ENCODE measurements at regions of chr22 and their contacts with region 1.

Region 1: DNA sequence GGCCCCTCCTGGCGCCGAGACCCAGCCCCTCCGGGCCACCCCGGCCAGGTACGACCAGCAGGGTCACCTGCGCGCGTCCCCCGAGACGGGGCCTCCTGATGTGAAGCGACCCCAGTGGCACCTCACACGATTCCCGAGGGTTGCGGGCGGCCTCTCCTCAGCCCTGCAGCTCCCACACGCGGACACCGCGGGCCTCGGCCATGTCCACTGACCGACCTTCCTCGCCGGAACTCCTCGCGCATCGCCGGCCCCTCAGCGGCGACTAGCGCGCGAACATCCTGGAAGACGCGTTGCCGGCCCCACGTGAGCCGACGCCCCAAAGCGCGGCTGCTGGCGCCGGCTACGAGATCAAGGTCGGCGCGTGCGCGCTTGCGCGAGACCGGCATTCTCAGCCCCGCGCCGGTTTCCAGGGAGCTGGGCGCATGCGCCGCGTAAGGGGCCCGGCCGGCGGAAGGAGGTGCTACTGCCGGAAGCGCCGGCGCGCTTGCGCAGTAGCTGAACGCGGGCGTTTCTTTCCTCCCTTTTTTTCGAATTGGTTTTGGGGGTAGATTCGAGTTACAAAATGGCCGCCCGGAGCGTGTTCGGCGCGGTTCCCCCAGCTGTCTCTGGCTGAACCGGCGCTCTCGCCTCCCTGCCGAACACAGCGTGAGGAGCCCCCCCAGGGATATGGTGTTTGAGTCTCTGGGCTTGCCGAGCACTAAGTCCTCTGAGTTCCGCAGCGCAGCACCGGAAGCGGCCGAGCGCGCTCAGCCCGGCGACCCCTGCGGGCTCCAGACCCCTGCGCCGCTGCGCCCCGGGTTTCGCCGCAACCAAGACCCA is at the start of gene NUP50:
- DNase-seq: peak; percentile 98
- ATAC-seq: peak; percentile 89
- H3K4me3 Mint-ChIP-seq: peak within 1 kb of the TSS; percentile 99
- H3K27ac Mint-ChIP-seq: peak within 1 kb of the TSS; percentile 97
- H3K4me1 Mint-ChIP-seq: peaks cover 56% of the 10 kb centered on the region
- H3K27me3 Mint-ChIP-seq: no peaks in the 10 kb centered on the region
- total RNA-seq, gene NUP50: 136 to 141 TPM

Region 2: GRCh38 chr22:44920183-44920582 is 243.5 kb before region 1 on chr22:
- CTCF ChIA-PET with region 1: no interaction called
- POLR2A ChIA-PET with region 1: no interaction called
- intact Hi-C with region 1: no loop called
- DNase-seq: no peak
- ATAC-seq: no peak
- H3K4me3 Mint-ChIP-seq: no peak overlapping the region
- H3K27ac Mint-ChIP-seq: no peak overlapping the region
- H3K4me1 Mint-ChIP-seq: no peaks in the 10 kb centered on the region
- H3K27me3 Mint-ChIP-seq: no peaks in the 10 kb centered on the region

Region 3: GRCh38 chr22:45064313-45065278 is 99.1 kb before region 1 on chr22:
- CTCF ChIA-PET with region 1: no interaction called
- POLR2A ChIA-PET with region 1: interaction called, 5 read pairs
- intact Hi-C with region 1: loop called in 1 of 2 experiments (anchors 1 kb)
- DNase-seq: peak; percentile 86
- ATAC-seq: peak; percentile 95
- H3K4me3 Mint-ChIP-seq: no peak overlapping the region
- H3K27ac Mint-ChIP-seq: peak overlapping the region; percentile 76
- H3K4me1 Mint-ChIP-seq: peaks cover 14% of the 10 kb centered on the region
- H3K27me3 Mint-ChIP-seq: peaks cover 6% of the 10 kb centered on the region

Region 4: GRCh38 chr22:45129703-45130524 is 33.7 kb before region 1 on chr22:
- CTCF ChIA-PET with region 1: interaction called, 4 read pairs
- POLR2A ChIA-PET with region 1: interaction called, 3 read pairs
- intact Hi-C with region 1: loop called in 1 of 2 experiments (anchors 1 kb)
- DNase-seq: peak; percentile 75
- ATAC-seq: peak; percentile 93
- H3K4me3 Mint-ChIP-seq: peak overlapping the region; percentile 11
- H3K27ac Mint-ChIP-seq: peak overlapping the region; percentile 89
- H3K4me1 Mint-ChIP-seq: peaks cover 28% of the 10 kb centered on the region
- H3K27me3 Mint-ChIP-seq: no peaks in the 10 kb centered on the region

Region 5: GRCh38 chr22:45240810-45241631 is 77.4 kb after region 1 on chr22 and contains the start of gene KIAA0930:
- CTCF ChIA-PET with region 1: no interaction called
- POLR2A ChIA-PET with region 1: no interaction called
- intact Hi-C with region 1: loop called in 1 of 2 experiments (anchors 1 kb)
- DNase-seq: peak; percentile 91
- ATAC-seq: peak; percentile 69
- H3K4me3 Mint-ChIP-seq: peak within 1 kb of the TSS; percentile 89
- H3K27ac Mint-ChIP-seq: peak within 1 kb of the TSS; percentile 78
- H3K4me1 Mint-ChIP-seq: peaks cover 10% of the 10 kb centered on the region
- H3K27me3 Mint-ChIP-seq: no peaks in the 10 kb centered on the region
- total RNA-seq, gene KIAA0930: 24.8 to 29.6 TPM

Region 6: DNA sequence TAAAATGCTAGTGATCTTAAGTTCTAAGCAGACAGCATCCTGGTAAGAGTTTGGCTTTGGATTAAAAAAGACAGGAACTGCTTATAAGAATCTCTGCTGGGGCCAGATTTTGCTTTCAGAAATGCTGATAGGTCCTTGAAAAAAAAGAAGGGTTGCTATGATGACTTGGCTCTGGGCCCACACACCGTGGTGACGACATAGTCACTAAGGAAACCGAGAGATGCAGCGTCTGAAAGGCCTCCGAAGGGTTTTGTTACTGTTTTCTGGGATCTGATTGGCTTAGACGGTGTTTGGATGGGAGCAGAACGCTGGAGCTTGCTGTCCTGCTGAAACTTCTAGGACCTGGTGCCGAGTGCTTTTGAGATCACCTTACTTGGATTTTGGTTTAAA is 154.5 kb after region 1 on chr22:
- CTCF ChIA-PET with region 1: interaction called, 3 read pairs
- POLR2A ChIA-PET with region 1: no interaction called
- intact Hi-C with region 1: loop called (anchors 2 to 10 kb)
- DNase-seq: peak; percentile 95
- ATAC-seq: peak; percentile 79
- H3K4me3 Mint-ChIP-seq: peak overlapping the region; percentile 72
- H3K27ac Mint-ChIP-seq: peak overlapping the region; percentile 95
- H3K4me1 Mint-ChIP-seq: peaks cover 89% of the 10 kb centered on the region
- H3K27me3 Mint-ChIP-seq: no peaks in the 10 kb centered on the region

Region 7: DNA sequence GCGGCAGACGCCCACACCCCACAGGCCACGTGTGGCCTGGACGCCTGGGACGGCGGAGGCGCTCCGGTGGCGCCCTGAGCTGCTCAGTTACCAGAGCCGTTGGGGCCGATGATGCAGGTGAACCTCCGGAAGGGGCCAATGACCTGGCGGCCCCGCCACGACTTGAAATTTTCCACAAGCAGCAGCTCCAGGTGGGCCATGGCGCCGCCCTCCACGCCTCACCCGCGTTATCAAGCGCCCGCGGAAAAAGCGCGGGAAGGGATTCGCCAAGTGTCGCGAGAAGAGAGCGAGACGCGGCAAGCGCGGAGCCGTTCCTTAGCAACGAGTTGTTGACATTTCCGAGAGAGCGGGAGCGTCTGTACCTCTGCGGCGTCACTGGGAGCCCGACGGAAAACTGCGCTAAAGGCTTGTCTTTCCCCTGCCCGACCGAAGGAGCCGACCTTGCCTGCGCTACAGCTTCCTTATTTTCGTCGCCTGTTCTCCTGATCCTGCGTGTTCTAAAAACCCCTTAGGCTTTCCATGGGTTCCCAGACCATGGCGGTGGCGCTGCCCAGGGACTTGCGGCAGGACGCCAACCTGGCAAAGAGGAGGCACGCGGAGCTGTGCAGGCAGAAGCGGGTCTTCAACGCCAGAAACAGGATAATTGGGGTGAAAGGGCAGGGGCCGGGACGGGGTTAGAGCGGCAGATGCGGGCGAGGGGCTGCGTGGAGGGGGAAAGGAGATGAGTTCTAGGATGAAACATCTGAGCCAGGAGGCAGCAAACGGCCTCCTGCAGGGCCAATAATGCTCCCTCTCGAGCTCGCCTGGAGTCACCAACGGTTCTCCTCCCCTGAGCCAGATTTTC is 249.9 kb after region 1 on chr22 and contains the starts of genes RIBC2 and SMC1B:
- CTCF ChIA-PET with region 1: no interaction called
- POLR2A ChIA-PET with region 1: no interaction called
- intact Hi-C with region 1: loop called in 1 of 2 experiments (anchors 2 kb)
- DNase-seq: peak; percentile 93
- ATAC-seq: peak; percentile 96
- H3K4me3 Mint-ChIP-seq: peak within 1 kb of the TSS; percentile 78
- H3K27ac Mint-ChIP-seq: peak within 1 kb of the TSS; percentile 75
- H3K4me1 Mint-ChIP-seq: peaks cover 10% of the 10 kb centered on the region
- H3K27me3 Mint-ChIP-seq: peaks cover 8% of the 10 kb centered on the region
- total RNA-seq, gene RIBC2: 6.3 to 7.8 TPM
- total RNA-seq, gene SMC1B: 0.62 to 0.67 TPM

Region 8: DNA sequence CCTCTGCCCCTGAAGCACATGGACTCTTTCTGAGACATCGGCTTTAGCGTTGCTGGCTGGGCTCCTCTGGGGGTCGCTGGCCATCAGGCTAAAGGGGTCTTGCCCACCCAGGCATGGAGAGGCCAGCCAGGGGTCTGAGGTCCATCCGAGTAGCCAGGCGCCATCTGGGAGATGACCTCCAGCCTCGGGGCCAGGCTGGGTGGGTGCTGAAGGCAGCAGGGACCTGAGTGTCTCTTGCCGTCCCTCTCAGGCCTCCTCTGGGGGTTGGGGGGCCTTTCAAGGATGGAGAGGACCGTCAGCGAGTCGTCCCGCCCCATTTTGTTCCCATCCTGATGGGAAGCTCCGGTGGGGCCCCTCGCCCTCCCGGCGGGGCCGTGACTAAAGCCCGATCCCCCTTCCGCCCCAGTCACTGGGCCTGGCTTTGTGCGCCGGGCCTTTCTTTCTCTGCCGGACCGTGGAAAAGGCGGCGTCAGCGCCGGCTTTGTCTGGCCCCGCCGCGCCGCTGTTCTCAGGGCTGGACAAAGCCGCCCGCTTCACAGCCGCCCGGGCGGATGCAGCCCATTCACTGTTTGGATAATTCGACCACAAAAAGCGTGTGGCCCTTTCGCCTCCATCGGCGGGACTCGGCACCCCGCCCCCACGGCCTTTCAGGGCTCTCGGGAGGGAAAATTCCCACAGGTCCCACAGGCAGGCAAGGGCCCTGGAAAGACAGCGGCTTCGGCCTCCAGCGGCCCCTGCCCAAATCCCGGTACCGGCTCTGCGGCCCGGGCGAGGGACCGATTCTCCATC is 725.8 kb after region 1 on chr22:
- CTCF ChIA-PET with region 1: no interaction called
- POLR2A ChIA-PET with region 1: no interaction called
- intact Hi-C with region 1: no loop called
- DNase-seq: no peak
- ATAC-seq: no peak
- H3K4me3 Mint-ChIP-seq: no peak overlapping the region
- H3K27ac Mint-ChIP-seq: no peak overlapping the region
- H3K4me1 Mint-ChIP-seq: no peaks in the 10 kb centered on the region
- H3K27me3 Mint-ChIP-seq: peaks cover 19% of the 10 kb centered on the region